CD4-positive, alpha-beta T cell (primary cell): ENCODE measurements at regions of chr10 and their contacts with region 1.

Region 1: GRCh38 chr10:30783939-30784500 is 154.5 kb upstream of the LYZL2 start:
- DNase-seq: peak; percentile 73 to 91 (median 82)
- ATAC-seq: peak; percentile 91
- H3K4me3 ChIP-seq: peak overlapping the region; percentile 48
- H3K4me3 Mint-ChIP-seq: peak overlapping the region; percentile 82
- H3K27ac ChIP-seq: peak overlapping the region; percentile 7 to 40
- H3K27ac Mint-ChIP-seq: peak overlapping the region; percentile 62
- H3K4me1 ChIP-seq: peaks cover 18% of the 10 kb centered on the region
- H3K4me1 Mint-ChIP-seq: peaks cover 26% of the 10 kb centered on the region
- H3K27me3 ChIP-seq: no peaks in the 10 kb centered on the region
- H3K27me3 Mint-ChIP-seq: no peaks in the 10 kb centered on the region
- CTCF ChIP-seq: peak; percentile 75

Region 2: GRCh38 chr10:30736685-30737232 is 47.3 kb before region 1 on chr10:
- CTCF ChIA-PET with region 1: no interaction called
- POLR2A ChIA-PET with region 1: no interaction called
- intact Hi-C with region 1: no loop called
- DNase-seq: no peak
- ATAC-seq: no peak
- H3K4me3 ChIP-seq: no peak overlapping the region
- H3K4me3 Mint-ChIP-seq: no peak overlapping the region
- H3K27ac ChIP-seq: no peak overlapping the region
- H3K27ac Mint-ChIP-seq: no peak overlapping the region
- H3K4me1 ChIP-seq: peaks cover 5% of the 10 kb centered on the region
- H3K4me1 Mint-ChIP-seq: no peaks in the 10 kb centered on the region
- H3K27me3 ChIP-seq: no peaks in the 10 kb centered on the region
- H3K27me3 Mint-ChIP-seq: no peaks in the 10 kb centered on the region
- CTCF ChIP-seq: no peak

Region 3: DNA sequence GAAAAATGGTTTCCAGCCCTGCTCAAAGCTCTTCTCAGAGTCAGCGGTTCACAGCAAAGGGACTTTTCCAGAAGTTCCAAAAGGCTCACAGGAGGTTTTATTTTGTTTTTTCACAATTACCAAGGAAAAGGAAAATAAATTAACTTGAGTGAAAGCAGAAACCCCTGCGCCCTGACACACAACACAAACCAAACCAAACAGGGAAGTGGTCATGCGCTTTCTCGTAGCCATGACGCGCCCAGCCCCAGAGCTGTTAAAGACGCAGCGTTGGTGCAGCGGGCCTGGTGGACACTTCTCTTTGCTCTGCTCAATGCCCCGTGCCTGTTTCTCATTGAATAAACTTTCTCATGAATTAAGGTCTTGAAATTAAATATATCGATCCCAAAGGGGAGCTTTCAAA is 20.1 kb before region 1 on chr10:
- CTCF ChIA-PET with region 1: no interaction called
- POLR2A ChIA-PET with region 1: no interaction called
- intact Hi-C with region 1: no loop called
- DNase-seq: peak in 2 of 14 experiments; percentile 11 to 12
- ATAC-seq: no peak
- H3K4me3 ChIP-seq: no peak overlapping the region
- H3K4me3 Mint-ChIP-seq: no peak overlapping the region
- H3K27ac ChIP-seq: no peak overlapping the region
- H3K27ac Mint-ChIP-seq: no peak overlapping the region
- H3K4me1 ChIP-seq: no peaks in the 10 kb centered on the region
- H3K4me1 Mint-ChIP-seq: no peaks in the 10 kb centered on the region
- H3K27me3 ChIP-seq: no peaks in the 10 kb centered on the region
- H3K27me3 Mint-ChIP-seq: no peaks in the 10 kb centered on the region
- CTCF ChIP-seq: no peak

Region 4: GRCh38 chr10:30821994-30822692 is 38.1 kb after region 1 on chr10:
- CTCF ChIA-PET with region 1: no interaction called
- POLR2A ChIA-PET with region 1: interaction called, 10 read pairs
- intact Hi-C with region 1: no loop called
- DNase-seq: no peak
- ATAC-seq: no peak
- H3K4me3 ChIP-seq: no peak overlapping the region
- H3K4me3 Mint-ChIP-seq: no peak overlapping the region
- H3K27ac ChIP-seq: no peak overlapping the region
- H3K27ac Mint-ChIP-seq: no peak overlapping the region
- H3K4me1 ChIP-seq: no peaks in the 10 kb centered on the region
- H3K4me1 Mint-ChIP-seq: no peaks in the 10 kb centered on the region
- H3K27me3 ChIP-seq: no peaks in the 10 kb centered on the region
- H3K27me3 Mint-ChIP-seq: no peaks in the 10 kb centered on the region
- CTCF ChIP-seq: no peak

Region 5: DNA sequence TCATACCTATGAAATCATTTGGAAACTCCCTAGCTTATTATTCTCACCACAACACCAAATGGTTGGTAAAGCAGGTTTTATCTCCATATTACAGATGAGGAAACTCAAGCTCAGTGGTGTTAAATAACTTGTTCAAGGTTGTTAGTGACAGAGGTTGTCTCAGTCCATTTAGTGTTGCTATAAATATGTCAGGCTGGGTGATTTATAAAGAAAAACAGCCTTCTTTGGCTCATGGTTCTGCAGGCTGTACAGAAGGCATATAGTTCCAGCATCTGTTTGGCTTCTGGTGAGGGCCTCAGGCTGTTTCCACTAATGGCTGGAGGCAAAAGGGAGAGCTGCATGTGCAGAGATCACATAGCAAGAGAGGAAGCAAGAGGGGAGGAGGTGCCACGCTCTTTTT is 151.1 kb after region 1 on chr10:
- CTCF ChIA-PET with region 1: no interaction called
- POLR2A ChIA-PET with region 1: no interaction called
- intact Hi-C with region 1: no loop called
- DNase-seq: no peak
- ATAC-seq: no peak
- H3K4me3 ChIP-seq: no peak overlapping the region
- H3K4me3 Mint-ChIP-seq: no peak overlapping the region
- H3K27ac ChIP-seq: no peak overlapping the region
- H3K27ac Mint-ChIP-seq: no peak overlapping the region
- H3K4me1 ChIP-seq: no peaks in the 10 kb centered on the region
- H3K4me1 Mint-ChIP-seq: peaks cover 11% of the 10 kb centered on the region
- H3K27me3 ChIP-seq: no peaks in the 10 kb centered on the region
- H3K27me3 Mint-ChIP-seq: no peaks in the 10 kb centered on the region
- CTCF ChIP-seq: no peak

Region 6: DNA sequence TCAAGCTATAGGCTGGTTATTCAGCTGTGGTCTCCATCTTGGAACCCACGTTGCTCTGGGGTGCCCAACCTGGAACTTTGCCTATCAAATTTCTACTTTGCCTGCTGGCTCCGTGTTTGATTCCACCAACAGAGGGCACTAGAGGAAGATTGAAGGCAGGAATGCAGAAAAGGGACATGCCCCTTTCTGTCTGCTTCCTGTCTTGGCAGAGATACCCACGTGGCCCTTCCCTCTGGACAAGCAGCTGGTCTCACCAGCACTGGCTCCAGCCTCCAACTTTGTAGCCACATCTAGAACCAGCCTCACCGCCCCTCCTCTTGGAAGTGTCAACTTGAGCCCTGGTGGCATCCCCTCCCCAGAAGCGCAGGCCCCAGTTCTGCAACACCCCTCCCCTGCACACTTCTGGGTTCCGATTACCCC is 299.8 kb after region 1 on chr10:
- CTCF ChIA-PET with region 1: no interaction called
- POLR2A ChIA-PET with region 1: no interaction called
- intact Hi-C with region 1: loop called (anchors 2 kb)
- DNase-seq: peak; percentile 26 to 75 (median 33)
- ATAC-seq: peak; percentile 63
- H3K4me3 ChIP-seq: no peak overlapping the region
- H3K4me3 Mint-ChIP-seq: no peak overlapping the region
- H3K27ac ChIP-seq: no peak overlapping the region
- H3K27ac Mint-ChIP-seq: no peak overlapping the region
- H3K4me1 ChIP-seq: peaks cover 5% of the 10 kb centered on the region
- H3K4me1 Mint-ChIP-seq: peaks cover 4% of the 10 kb centered on the region
- H3K27me3 ChIP-seq: no peaks in the 10 kb centered on the region
- H3K27me3 Mint-ChIP-seq: no peaks in the 10 kb centered on the region
- CTCF ChIP-seq: peak; percentile 51

Region 7: GRCh38 chr10:31318854-31319601 is 535.0 kb after region 1 on chr10 and contains the start of gene ZEB1:
- CTCF ChIA-PET with region 1: no interaction called
- POLR2A ChIA-PET with region 1: interaction called, 8 read pairs
- intact Hi-C with region 1: loop called (anchors 2 to 5 kb)
- DNase-seq: peak; percentile 78 to 97 (median 88)
- ATAC-seq: peak; percentile 40
- H3K4me3 ChIP-seq: peak within 1 kb of the TSS; percentile 81
- H3K4me3 Mint-ChIP-seq: peak within 1 kb of the TSS; percentile 98
- H3K27ac ChIP-seq: peak within 1 kb of the TSS; percentile 80 to 98
- H3K27ac Mint-ChIP-seq: peak within 1 kb of the TSS; percentile 94
- H3K4me1 ChIP-seq: peaks cover 10% of the 10 kb centered on the region
- H3K4me1 Mint-ChIP-seq: peaks cover 45% of the 10 kb centered on the region
- H3K27me3 ChIP-seq: no peaks in the 10 kb centered on the region
- H3K27me3 Mint-ChIP-seq: no peaks in the 10 kb centered on the region
- CTCF ChIP-seq: peak; percentile 33
- total RNA-seq, gene ZEB1: 132 to 134 TPM

Region 8: DNA sequence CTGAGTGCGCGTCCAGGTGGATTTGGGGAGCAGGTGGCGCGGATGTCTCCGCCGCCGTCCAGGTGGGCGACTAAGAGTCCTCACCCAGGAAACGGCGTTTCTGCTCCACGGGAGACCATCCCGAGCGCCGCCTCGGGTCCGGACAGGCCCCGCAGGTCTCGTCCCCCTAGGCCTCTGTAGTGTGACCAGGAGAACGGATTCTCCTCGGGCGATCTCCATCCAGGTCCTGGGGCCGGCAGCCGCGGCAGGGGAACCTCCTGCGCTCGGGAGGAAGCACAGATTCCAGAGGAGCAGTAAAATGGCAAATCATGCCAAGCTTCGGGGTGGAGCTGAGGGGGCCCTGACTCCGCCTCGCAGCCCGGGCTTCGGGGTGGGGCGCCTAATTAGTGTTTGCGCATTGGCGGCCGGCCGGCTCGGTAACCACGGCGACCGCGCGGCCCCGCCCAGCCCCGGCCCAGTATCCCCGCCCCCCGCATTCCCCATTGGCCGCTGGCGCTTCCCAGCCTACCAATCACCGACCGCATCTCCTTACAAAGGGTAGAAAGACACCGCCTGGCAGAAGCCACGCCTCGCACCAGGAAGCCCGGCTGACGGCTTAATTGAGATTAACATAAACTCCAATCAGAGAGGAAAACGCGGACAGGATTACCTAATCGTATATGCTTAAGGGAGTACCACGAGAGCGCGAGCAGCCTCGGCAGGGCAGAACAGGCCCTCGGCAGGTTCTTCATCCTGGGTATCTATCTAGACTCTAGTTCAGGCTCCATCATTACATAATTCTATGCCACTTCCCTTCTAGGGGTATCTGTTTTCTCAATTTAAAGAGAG is 976.0 kb after region 1 on chr10:
- CTCF ChIA-PET with region 1: no interaction called
- POLR2A ChIA-PET with region 1: interaction called, 10 read pairs
- intact Hi-C with region 1: no loop called
- DNase-seq: peak; percentile 90 to 99 (median 94)
- ATAC-seq: peak; percentile 92
- H3K4me3 ChIP-seq: peak overlapping the region; percentile 99
- H3K4me3 Mint-ChIP-seq: peak overlapping the region; percentile 88
- H3K27ac ChIP-seq: peak overlapping the region; percentile 87 to 92
- H3K27ac Mint-ChIP-seq: peak overlapping the region; percentile 96
- H3K4me1 ChIP-seq: peaks cover 19% of the 10 kb centered on the region
- H3K4me1 Mint-ChIP-seq: peaks cover 19% of the 10 kb centered on the region
- H3K27me3 ChIP-seq: no peaks in the 10 kb centered on the region
- H3K27me3 Mint-ChIP-seq: no peaks in the 10 kb centered on the region
- CTCF ChIP-seq: no peak

Region 9: DNA sequence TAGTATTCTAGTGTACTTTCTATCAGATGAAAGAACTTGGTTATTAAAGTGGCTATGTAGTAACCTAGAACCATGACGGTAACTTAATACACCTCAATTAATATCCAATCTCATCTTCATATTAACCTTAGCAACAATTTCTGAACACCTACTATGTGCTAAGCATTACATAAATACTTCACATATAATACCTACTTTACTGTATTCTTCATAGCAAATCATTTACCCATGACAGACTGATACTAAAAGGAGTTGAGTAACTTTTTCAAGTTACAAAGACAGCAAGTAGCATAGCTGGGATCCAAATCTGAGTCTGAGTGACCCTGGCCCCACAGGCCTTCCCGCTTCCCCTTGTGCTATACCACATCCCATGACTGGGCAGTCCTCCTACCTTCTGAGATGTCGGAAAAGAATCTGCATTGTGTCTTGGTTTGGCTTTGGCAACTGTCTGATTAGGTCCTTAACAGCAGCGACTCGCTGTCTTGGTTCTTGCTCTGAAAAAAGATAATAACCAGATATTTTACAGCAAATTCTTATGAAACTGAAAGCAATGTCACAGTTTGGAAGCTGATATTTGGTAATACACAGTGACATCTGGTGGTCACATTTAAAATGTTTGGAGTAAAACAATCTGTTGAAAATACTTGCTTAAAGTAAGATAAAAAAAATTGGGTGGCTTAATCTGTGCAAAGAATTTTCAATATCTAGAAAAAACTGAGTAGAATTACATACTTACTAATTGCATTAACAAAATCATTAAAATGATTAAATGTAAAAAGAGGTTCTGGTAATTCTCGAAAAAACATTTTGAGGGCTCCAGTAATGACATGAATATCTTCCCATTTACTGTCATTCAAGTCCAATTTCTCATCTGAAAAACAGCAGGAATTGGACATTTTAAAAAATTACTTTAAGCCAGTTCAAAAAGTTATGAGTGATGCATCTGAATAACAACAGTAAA is 1024.5 kb after region 1 on chr10:
- CTCF ChIA-PET with region 1: interaction called, 9 read pairs
- POLR2A ChIA-PET with region 1: interaction called, 4 read pairs
- intact Hi-C with region 1: loop called (anchors 1 kb)
- DNase-seq: peak in 4 of 14 experiments; percentile 3 to 75 (median 70)
- ATAC-seq: peak; percentile 68
- H3K4me3 ChIP-seq: no peak overlapping the region
- H3K4me3 Mint-ChIP-seq: no peak overlapping the region
- H3K27ac ChIP-seq: no peak overlapping the region
- H3K27ac Mint-ChIP-seq: peak overlapping the region; percentile 50
- H3K4me1 ChIP-seq: peaks cover 3% of the 10 kb centered on the region
- H3K4me1 Mint-ChIP-seq: peaks cover 14% of the 10 kb centered on the region
- H3K27me3 ChIP-seq: no peaks in the 10 kb centered on the region
- H3K27me3 Mint-ChIP-seq: no peaks in the 10 kb centered on the region
- CTCF ChIP-seq: peak; percentile 73